ENCODE measurements at regions of chr6 and their contacts with region 1.

Region 1: GRCh38 chr6:139219271-139219729 is 72.5 kb downstream of the TXLNB start:
- DNase-seq: peak; percentile 52
- H3K4me3 ChIP-seq: peak overlapping the region in 1 of 4 donors; percentile 15
- H3K27ac ChIP-seq: peak overlapping the region; percentile 51 to 80 (median 65)
- H3K4me1 ChIP-seq: peaks cover 0 to 11% (median 3%) of the 10 kb centered on the region in 3 donors
- H3K27me3 ChIP-seq: no peaks in the 10 kb centered on the region
- CTCF ChIP-seq: peak; percentile 33 to 87 (median 74)
- POLR2A ChIP-seq: peak in 1 of 4 donors; percentile 39

Region 2: DNA sequence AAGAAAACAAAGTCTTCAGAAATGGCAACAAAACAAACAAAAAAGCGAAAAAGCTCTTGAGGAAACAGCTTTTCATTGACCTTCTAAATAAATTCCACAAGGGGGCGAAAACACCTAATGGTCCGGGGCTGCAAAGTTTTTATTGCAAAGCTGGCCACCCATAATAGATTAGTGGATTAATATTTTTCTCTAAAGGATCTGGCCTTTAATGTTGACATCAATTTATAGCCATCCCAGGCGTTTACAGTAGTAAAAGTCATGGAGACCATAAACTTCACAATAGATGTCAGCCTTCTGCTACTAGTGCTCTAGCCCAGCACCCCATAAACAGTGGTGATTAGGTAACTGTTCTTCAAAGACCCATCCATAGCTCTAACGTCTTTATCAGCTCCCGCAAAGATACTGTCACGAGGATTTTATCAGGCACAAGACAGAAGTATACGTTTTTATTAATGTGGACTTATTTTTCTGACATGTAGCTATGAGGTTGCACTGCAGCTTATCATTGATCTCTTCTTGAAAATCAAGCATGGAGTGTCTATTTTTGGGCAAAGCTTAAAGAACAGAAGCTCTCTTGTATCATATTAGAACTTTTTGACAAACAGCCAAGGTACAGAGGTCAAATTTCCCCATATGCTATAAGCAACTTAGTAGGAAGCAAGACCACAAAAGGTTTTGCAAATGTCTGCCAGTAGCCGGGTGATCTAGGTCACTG is 150.4 kb after region 1 on chr6:
- intact Hi-C with region 1: loop called (anchors 5 kb)
- DNase-seq: no peak
- H3K4me3 ChIP-seq: peak overlapping the region in 3 of 4 donors; percentile 1 to 94 (median 90)
- H3K27ac ChIP-seq: peak overlapping the region; percentile 45 to 99 (median 73)
- H3K4me1 ChIP-seq: peaks cover 6 to 39% (median 8%) of the 10 kb centered on the region in 3 donors
- H3K27me3 ChIP-seq: no peaks in the 10 kb centered on the region
- CTCF ChIP-seq: peak; percentile 70 to 80 (median 77)
- POLR2A ChIP-seq: no peak